ENCODE measurements at regions of chr17 and their contacts with region 1.

Region 1: GRCh38 chr17:10729334-10730193 is at the start of gene TMEM220:
- DNase-seq: peak; percentile 94
- H3K4me3 ChIP-seq: peak within 1 kb of the TSS; percentile 57 to 81 (median 73)
- H3K27ac ChIP-seq: peak within 1 kb of the TSS; percentile 87 to 96 (median 95)
- H3K4me1 ChIP-seq: peaks cover 2 to 17% (median 10%) of the 10 kb centered on the region in 4 donors
- H3K27me3 ChIP-seq: no peaks in the 10 kb centered on the region
- CTCF ChIP-seq: no peak
- EP300 ChIP-seq: no peak
- POLR2A ChIP-seq: peak; percentile 52 to 58
- total RNA-seq, gene TMEM220: 9.1 to 16.8 (median 12.2) TPM

Region 2: DNA sequence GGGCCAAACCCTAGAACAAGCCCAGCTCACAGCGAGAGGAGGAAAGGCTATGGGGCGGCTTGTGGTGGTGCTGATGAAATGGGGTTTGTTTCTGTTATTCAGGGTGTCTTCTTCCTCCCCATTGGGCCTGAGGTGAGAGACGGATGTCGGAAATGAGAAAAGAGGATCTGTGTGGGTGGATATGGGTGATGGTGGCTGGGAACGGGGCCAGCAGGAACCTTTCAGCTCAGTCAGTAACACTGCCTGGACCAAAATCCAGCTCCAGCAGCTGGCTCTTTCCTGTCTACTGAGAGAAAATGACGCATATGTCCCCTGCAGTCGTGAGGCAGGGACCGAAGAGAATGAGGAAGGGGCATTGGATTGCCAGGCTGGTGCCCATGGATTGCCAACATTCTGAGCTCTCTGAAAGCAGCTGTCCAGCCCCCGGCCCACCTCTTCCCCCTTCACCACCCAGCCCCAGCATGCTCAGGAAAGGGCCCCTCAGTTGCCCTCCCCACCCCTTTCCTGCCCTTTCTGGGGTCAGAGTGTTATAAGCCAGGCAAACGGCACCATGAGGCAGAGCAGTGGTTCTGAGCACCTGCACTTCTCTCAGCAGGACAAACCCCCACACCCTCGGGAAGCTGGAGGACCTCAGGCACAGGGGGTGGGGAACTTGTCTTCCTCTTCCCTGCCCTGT is 76.4 kb before region 1 on chr17:
- intact Hi-C with region 1: no loop called
- DNase-seq: no peak
- H3K4me3 ChIP-seq: no peak overlapping the region
- H3K27ac ChIP-seq: no peak overlapping the region
- H3K4me1 ChIP-seq: no peaks in the 10 kb centered on the region
- H3K27me3 ChIP-seq: no peaks in the 10 kb centered on the region
- CTCF ChIP-seq: no peak
- EP300 ChIP-seq: no peak
- POLR2A ChIP-seq: no peak

Region 3: DNA sequence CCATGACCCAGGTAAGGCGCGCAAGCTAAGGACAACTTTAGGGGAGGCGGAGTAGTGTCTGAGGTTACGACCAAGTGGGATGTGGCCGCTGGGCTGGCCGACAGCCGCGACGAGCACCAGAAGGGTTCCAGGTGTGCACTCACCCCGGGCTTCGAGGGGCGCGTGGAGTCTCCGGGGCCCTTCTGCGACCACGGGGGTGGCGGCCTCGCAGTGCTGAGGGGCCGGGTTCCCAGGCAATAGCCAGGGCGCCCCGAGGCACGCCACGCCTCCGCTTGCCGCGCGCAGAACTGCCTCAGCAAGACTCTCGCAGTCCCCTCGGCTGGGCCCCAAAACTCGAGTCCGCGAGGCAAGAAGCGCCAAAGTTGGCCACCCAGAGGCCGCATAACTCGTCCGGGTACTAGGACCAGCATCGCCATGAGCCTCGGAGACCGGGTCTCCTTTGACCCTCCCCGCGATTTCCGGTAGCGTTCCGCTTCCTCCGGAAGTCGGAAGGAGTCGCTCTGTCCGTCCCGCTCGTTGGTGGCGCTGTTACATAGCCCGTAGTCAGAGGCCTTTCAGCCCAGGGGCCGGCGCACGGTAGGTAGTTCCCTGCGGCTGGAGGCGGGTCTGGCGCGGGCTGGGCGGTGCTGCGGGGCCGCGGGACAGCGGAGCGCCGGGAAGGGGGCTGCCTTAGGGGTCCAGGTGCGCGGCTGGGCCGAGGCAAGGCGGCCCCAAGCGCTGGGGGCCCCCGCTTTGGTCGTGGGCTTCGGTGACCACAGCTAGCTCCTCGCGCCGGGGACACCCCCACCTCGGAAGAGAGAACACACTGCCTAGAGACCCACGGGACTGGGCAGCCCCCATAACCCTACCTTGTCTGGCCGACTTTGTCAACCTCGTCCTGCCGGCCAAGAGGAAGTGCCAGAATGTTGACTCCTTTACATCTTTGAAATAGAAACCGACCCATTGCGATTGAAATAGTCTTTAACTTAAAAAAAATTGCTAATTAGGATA is 32.2 kb before region 1 on chr17 and contains the starts of genes ADPRM and SCO1:
- intact Hi-C with region 1: loop called (anchors 2 kb)
- DNase-seq: peak; percentile 96
- H3K4me3 ChIP-seq: peak within 1 kb of the TSS; percentile 71 to 97 (median 86)
- H3K27ac ChIP-seq: peak within 1 kb of the TSS; percentile 89 to 97 (median 94)
- H3K4me1 ChIP-seq: peaks cover 0 to 34% (median 22%) of the 10 kb centered on the region in 4 donors
- H3K27me3 ChIP-seq: no peaks in the 10 kb centered on the region
- CTCF ChIP-seq: peak in 3 of 4 experiments; percentile 20 to 25 (median 21)
- EP300 ChIP-seq: no peak
- POLR2A ChIP-seq: peak; percentile 81 to 85
- total RNA-seq, gene ADPRM: 7.6 to 16.6 (median 15.3) TPM
- total RNA-seq, gene SCO1: 12.2 to 22.1 (median 17.9) TPM

Region 4: DNA sequence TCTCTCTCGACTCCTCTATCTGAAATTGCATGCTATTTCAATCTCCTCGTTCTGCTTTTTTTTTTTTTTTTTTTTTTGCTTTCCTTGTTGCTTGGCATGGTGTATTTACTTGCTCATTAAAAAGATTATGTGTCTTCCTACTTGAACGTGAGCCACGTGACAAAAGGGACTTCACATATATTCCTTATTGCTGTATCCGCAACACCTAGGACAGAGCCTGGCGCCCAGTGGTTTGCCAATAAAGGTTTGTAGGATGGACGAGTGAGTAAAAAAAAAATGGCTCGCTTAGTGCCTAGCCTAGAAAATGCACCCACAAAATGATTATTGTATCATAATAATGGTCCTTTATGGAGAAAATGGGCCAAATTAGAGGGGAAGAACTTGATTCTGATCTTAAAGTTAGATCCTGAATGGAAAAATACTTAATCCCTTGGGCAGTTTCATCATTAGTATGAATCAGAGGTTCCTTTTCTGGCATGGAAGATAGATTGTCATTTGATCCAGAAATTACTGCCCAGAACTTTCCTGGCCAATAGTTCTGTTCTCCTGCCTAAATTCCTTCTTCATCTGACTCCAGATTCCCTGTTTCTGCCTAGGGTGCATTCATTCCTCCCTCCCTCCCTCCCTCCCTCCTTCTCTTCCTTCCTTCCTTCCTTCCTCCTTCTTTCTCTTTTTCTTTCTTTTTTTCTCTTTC is 13.9 kb after region 1 on chr17:
- intact Hi-C with region 1: no loop called
- DNase-seq: peak; percentile 49
- H3K4me3 ChIP-seq: no peak overlapping the region
- H3K27ac ChIP-seq: peak overlapping the region in 3 of 4 donors; percentile 12 to 55 (median 37)
- H3K4me1 ChIP-seq: no peaks in the 10 kb centered on the region
- H3K27me3 ChIP-seq: no peaks in the 10 kb centered on the region
- CTCF ChIP-seq: no peak
- EP300 ChIP-seq: no peak
- POLR2A ChIP-seq: no peak

Region 5: GRCh38 chr17:11719203-11719602 is 989.6 kb after region 1 on chr17:
- intact Hi-C with region 1: no loop called
- DNase-seq: peak; percentile 60
- H3K4me3 ChIP-seq: no peak overlapping the region
- H3K27ac ChIP-seq: no peak overlapping the region
- H3K4me1 ChIP-seq: no peaks in the 10 kb centered on the region
- H3K27me3 ChIP-seq: no peaks in the 10 kb centered on the region
- CTCF ChIP-seq: no peak
- EP300 ChIP-seq: no peak
- POLR2A ChIP-seq: no peak

Measured in sigmoid colon (tissue), 7 donors.